CD4-positive, alpha-beta T cell (primary cell): ENCODE measurements at regions of chr7 and their contacts with region 1.

Region 1: GRCh38 chr7:82980130-82980788 is 182.4 kb downstream of the PCLO start:
- DNase-seq: no peak
- ATAC-seq: no peak
- H3K4me3 ChIP-seq: no peak overlapping the region
- H3K4me3 Mint-ChIP-seq: no peak overlapping the region
- H3K27ac ChIP-seq: no peak overlapping the region
- H3K27ac Mint-ChIP-seq: no peak overlapping the region
- H3K4me1 ChIP-seq: no peaks in the 10 kb centered on the region
- H3K4me1 Mint-ChIP-seq: no peaks in the 10 kb centered on the region
- H3K27me3 ChIP-seq: no peaks in the 10 kb centered on the region
- H3K27me3 Mint-ChIP-seq: no peaks in the 10 kb centered on the region
- CTCF ChIP-seq: no peak

Region 2: DNA sequence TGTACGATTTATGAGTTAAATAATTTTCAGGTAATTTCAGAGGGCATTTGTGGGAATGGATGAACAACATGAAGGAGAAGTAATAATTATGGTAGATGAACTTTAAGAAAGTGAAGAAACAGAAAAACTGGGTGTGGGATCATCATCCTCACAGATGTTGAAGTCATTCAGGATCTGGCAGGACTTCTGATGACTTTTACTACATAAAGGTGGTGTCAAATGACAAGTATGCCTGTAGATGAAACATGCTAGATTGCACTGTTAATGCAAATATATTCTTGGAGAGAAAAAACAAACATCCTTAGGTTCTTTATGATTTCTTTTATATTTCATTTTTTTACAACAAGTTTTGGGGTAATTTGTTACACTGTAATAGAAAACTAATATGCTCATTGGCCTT is 47.7 kb before region 1 on chr7:
- CTCF ChIA-PET with region 1: no interaction called
- POLR2A ChIA-PET with region 1: no interaction called
- intact Hi-C with region 1: loop called in 1 of 2 experiments (anchors 5 kb)
- DNase-seq: no peak
- ATAC-seq: no peak
- H3K4me3 ChIP-seq: no peak overlapping the region
- H3K4me3 Mint-ChIP-seq: no peak overlapping the region
- H3K27ac ChIP-seq: no peak overlapping the region
- H3K27ac Mint-ChIP-seq: no peak overlapping the region
- H3K4me1 ChIP-seq: no peaks in the 10 kb centered on the region
- H3K4me1 Mint-ChIP-seq: no peaks in the 10 kb centered on the region
- H3K27me3 ChIP-seq: no peaks in the 10 kb centered on the region
- H3K27me3 Mint-ChIP-seq: no peaks in the 10 kb centered on the region
- CTCF ChIP-seq: no peak